Transverse colon (tissue), 4 donors: ENCODE measurements at regions of chr10 and their contacts with region 1.

Region 1: DNA sequence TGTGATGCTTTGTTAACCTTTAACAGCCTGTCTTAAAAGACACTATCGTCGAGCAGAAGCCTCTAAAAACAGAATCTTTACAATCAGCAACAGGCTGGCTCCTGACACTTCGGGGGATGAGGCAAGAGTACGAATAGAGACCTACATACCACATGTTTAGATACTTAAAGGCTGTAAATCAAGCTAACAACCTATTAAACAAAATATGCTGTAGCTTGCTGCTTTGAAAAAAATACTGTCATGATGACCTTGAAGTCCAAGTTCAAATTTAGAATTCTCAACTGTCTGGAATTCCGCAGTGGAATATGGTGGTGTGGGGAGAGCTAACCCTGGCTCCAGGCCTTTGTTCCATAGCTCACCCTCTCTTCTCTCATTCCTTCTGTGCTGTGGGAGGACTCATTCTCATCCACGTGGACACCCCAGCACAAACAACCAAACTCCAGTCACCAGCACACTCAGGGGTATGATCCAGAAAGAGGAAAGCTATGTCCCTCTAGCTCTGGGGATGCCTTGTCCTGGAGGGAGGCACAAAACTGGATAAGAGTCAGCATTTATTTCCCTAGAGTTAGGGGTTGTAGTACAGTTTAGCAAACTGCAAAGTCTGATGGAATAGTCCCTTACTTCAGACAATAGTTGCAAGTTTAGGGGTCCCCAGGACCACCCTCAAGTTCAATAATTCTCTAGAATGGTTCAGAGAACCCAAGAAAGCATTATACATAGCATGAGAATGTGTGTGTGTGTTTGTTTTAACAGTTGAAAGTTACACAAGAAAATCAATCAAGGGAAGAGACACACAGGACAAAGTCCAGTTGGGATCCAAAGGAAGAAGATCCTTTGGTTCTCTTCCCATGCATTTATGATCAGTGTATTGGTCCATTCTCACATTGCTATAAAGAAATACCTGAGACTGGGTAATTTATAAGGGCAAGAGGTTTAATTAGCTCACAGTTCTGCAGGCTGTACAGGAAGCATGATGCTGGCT is 196.1 kb upstream of the SVIL start:
- DNase-seq: no peak
- H3K4me3 ChIP-seq: no peak overlapping the region
- H3K27ac ChIP-seq: peak overlapping the region; percentile 34 to 73 (median 66)
- H3K4me1 ChIP-seq: no peaks in the 10 kb centered on the region
- H3K27me3 ChIP-seq: no peaks in the 10 kb centered on the region
- CTCF ChIP-seq: no peak
- EP300 ChIP-seq: no peak
- POLR2A ChIP-seq: no peak

Region 2: DNA sequence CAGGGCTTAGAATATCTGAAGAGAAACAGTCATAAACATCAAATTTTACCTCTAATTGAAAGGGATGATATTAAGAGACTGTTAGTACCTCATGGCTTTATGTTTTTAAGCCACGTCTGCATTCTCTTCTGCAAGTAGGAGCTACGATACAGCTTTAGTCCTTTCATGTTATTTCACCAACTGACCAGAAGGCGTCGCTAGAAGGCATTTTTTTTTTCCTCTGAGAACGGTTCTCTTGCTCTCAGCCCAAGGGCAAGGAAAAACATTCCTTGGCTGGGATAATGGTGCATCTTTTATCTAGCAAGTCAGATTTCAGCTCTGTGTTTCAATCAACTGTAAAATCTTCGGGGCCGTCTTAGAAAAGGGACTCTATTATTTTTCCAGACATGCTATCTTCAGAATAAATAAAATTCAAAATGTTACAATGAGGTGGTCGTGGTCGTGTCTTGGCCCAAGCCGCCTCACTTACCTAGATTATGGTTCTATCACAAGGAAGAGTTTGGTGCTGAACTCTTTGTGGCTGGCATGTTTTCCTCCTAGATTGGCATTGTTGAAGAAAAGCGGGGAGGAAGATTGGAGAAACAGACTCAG is 840.3 kb after region 1 on chr10:
- in situ Hi-C with region 1: no loop called
- intact Hi-C with region 1: loop called (anchors 5 kb)
- DNase-seq: peak; percentile 14
- H3K4me3 ChIP-seq: peak overlapping the region in 1 of 4 donors; percentile 36
- H3K27ac ChIP-seq: no peak overlapping the region
- H3K4me1 ChIP-seq: peaks cover 0 to 6% (median 0%) of the 10 kb centered on the region in 4 donors
- H3K27me3 ChIP-seq: no peaks in the 10 kb centered on the region
- CTCF ChIP-seq: peak; percentile 61 to 79 (median 72)
- EP300 ChIP-seq: no peak
- POLR2A ChIP-seq: no peak